Panc1 (cell line): ENCODE measurements at regions of chr3 and their contacts with region 1.

Region 1: DNA sequence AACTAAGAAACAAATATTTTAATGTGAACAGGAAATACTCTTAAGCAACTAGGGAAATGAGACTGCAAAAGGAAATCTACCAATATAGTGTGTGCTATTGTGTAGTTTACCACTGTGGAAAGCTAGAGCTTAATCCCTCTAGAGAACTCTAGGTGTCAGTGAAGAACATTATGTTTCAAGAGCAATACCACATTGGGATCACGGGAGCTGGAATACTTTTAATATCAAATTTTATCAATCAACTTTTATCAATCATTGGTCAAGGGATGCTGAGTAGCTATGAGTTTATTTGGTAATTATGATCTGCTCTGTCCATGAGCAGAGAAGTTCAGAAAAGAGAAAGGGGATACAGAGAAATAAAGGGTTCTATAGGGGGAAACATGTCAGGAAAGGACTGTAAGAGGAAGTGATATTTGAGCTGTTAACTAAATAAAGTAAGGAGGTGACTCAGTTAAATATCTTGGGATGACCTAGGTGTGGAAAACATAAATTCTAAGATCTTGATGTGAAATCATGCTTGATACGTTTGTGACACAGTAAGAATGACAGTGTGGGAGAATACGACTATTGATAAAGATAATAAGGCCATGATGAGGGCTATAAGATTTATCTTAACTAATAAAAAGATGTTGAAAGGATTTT is 762.2 kb upstream of the ALCAM start:
- DNase-seq: no peak
- ATAC-seq: no peak
- H3K4me3 ChIP-seq: no peak overlapping the region
- H3K27ac ChIP-seq: no peak overlapping the region
- H3K4me1 ChIP-seq: no peaks in the 10 kb centered on the region
- H3K27me3 ChIP-seq: no peaks in the 10 kb centered on the region
- CTCF ChIP-seq: peak; percentile 14; the same call in 1 of the 2 replicates

Region 2: GRCh38 chr3:104582092-104582491 is 22.4 kb before region 1 on chr3:
- CTCF ChIA-PET with region 1: no interaction called
- POLR2A ChIA-PET with region 1: no interaction called
- in situ Hi-C with region 1: no loop called
- intact Hi-C with region 1: no loop called
- DNase-seq: no peak
- ATAC-seq: no peak
- H3K4me3 ChIP-seq: no peak overlapping the region
- H3K27ac ChIP-seq: no peak overlapping the region
- H3K4me1 ChIP-seq: no peaks in the 10 kb centered on the region
- H3K27me3 ChIP-seq: no peaks in the 10 kb centered on the region
- CTCF ChIP-seq: no peak

Region 3: GRCh38 chr3:104763007-104763406 is 158.5 kb after region 1 on chr3:
- CTCF ChIA-PET with region 1: no interaction called
- POLR2A ChIA-PET with region 1: no interaction called
- in situ Hi-C with region 1: no loop called
- intact Hi-C with region 1: no loop called
- DNase-seq: no peak
- ATAC-seq: no peak
- H3K4me3 ChIP-seq: no peak overlapping the region
- H3K27ac ChIP-seq: no peak overlapping the region
- H3K4me1 ChIP-seq: no peaks in the 10 kb centered on the region
- H3K27me3 ChIP-seq: no peaks in the 10 kb centered on the region
- CTCF ChIP-seq: no peak

Region 4: DNA sequence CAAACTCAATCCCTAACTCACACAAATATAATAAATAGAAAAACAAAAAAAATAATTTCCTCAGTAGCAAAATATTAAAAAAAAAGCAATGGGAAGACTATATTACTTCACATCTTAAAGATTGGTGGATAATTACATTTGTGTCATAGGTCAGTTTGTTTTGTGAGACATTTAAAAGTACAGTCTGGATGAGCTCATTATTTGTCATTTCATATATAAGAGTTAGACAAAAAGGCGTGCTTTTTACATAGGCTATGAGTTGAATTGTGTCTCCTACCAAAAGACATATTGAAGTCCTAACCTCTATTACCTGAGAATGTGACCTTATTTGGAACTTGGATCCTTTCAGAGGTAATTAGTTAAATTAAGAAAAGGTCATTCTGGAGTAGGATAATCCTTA is 1974.4 kb after region 1 on chr3:
- CTCF ChIA-PET with region 1: no interaction called
- POLR2A ChIA-PET with region 1: interaction called, 12 read pairs
- in situ Hi-C with region 1: no loop called
- intact Hi-C with region 1: no loop called
- DNase-seq: no peak
- ATAC-seq: no peak
- H3K4me3 ChIP-seq: no peak overlapping the region
- H3K27ac ChIP-seq: no peak overlapping the region
- H3K4me1 ChIP-seq: no peaks in the 10 kb centered on the region
- H3K27me3 ChIP-seq: no peaks in the 10 kb centered on the region
- CTCF ChIP-seq: no peak